HepG2 (cell line): ENCODE measurements at regions of chr12 and their contacts with region 1.

Region 1: GRCh38 chr12:3202734-3203446 is 125.7 kb downstream of the TSPAN9 start:
- DNase-seq: peak; percentile 28
- ATAC-seq: peak; percentile 63
- H3K4me3 ChIP-seq: no peak overlapping the region
- H3K27ac ChIP-seq: no peak overlapping the region
- H3K4me1 ChIP-seq: 0 out of 2 replicates have a peak, but pooled peaks cover 8% of the 10 kb centered on the region
- H3K27me3 ChIP-seq: no peaks in the 10 kb centered on the region
- CTCF ChIP-seq: peak; percentile 92
- EP300 ChIP-seq: no peak
- POLR2A ChIP-seq: no peak
- RAD21 ChIP-seq: peak; percentile 53; the same call in 1 of the 2 replicates

Region 2: GRCh38 chr12:3014641-3015040 is 188.2 kb before region 1 on chr12:
- CTCF ChIA-PET with region 1: no interaction called
- POLR2A ChIA-PET with region 1: no interaction called
- in situ Hi-C with region 1: no loop called
- intact Hi-C with region 1: no loop called
- DNase-seq: no peak
- ATAC-seq: no peak
- H3K4me3 ChIP-seq: no peak overlapping the region
- H3K27ac ChIP-seq: no peak overlapping the region
- H3K4me1 ChIP-seq: no peaks in the 10 kb centered on the region
- H3K27me3 ChIP-seq: no peaks in the 10 kb centered on the region
- CTCF ChIP-seq: no peak
- EP300 ChIP-seq: no peak
- POLR2A ChIP-seq: no peak
- RAD21 ChIP-seq: no peak

Region 3: DNA sequence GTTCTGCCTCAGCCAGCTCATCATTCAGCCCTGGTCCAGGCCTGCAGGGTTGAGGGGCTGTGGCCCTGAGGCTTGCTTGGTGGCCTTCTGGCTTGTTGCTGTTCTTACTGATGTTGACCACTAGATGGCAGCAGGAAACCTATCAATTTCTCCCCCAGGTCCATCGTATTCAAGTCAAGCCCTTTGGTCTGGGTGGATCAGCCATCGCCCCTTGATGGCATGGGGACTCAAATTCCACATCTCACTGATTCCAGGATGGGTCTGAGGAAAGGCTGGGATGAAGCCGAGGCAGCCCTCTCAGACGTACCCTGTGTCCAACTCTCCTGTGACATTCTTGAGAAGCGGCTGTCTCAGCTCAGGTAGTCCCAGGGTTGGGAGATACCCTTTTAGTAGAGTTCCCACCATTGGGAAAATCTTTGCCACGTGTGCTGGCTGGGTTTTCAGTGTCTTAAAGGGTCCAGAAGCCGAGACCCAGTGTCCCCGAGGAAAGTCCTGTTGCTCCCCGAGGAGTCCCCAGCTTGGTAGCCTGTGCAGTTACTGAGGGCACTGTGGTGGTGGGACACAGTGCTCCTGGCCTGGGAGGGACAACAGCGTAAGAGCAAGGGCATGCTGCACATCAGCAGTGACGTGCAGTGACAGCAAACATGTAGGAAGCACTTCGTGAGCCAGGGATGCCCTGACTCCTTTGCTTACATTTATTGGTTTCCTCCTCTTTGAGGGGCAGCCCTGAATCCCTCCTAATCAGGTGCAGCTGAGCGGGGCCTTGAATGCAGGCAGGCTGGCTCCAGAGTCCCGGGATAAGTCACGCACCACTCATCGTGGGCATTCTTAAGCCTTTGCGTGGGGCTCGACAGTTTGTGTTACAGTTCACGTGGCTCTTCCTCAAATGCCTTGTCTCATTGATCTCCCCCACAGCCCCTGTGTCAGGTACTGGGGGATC is 67.1 kb before region 1 on chr12:
- CTCF ChIA-PET with region 1: interaction called, 28 read pairs
- POLR2A ChIA-PET with region 1: no interaction called
- in situ Hi-C with region 1: loop called (anchors 5 kb)
- intact Hi-C with region 1: no loop called
- DNase-seq: peak; percentile 73
- ATAC-seq: peak; percentile 84
- H3K4me3 ChIP-seq: no peak overlapping the region
- H3K27ac ChIP-seq: no peak overlapping the region
- H3K4me1 ChIP-seq: peaks cover 5% of the 10 kb centered on the region; the same call in 1 of the 2 replicates
- H3K27me3 ChIP-seq: no peaks in the 10 kb centered on the region
- CTCF ChIP-seq: peak; percentile 92
- EP300 ChIP-seq: no peak
- POLR2A ChIP-seq: no peak
- RAD21 ChIP-seq: peak; percentile 93